K562 (cell line): ENCODE measurements at regions of chr3 and their contacts with region 1.

Region 1: GRCh38 chr3:133377396-133377795 is 22.5 kb upstream of the BFSP2 start:
- DNase-seq: peak in 2 of 4 experiments; percentile 18 to 24
- ATAC-seq: peak; percentile 71
- H3K4me3 ChIP-seq: no peak overlapping the region
- H3K27ac ChIP-seq: no peak overlapping the region
- H3K4me1 ChIP-seq: no peaks in the 10 kb centered on the region; a peak in 2 of 5 replicates
- H3K27me3 ChIP-seq: no peaks in the 10 kb centered on the region; a peak in 1 of 5 replicates
- CTCF ChIP-seq: peak; percentile 30 to 53 (median 34); a peak in 3 of 6 replicates
- EP300 ChIP-seq: no peak
- POLR2A ChIP-seq: no peak
- RAD21 ChIP-seq: peak; percentile 44 to 57

Region 2: GRCh38 chr3:133354721-133355120 is 22.7 kb before region 1 on chr3:
- CTCF ChIA-PET with region 1: no interaction called
- POLR2A ChIA-PET with region 1: no interaction called
- in situ Hi-C with region 1: no loop called
- intact Hi-C with region 1: no loop called
- DNase-seq: no peak
- ATAC-seq: no peak
- H3K4me3 ChIP-seq: no peak overlapping the region
- H3K27ac ChIP-seq: no peak overlapping the region
- H3K4me1 ChIP-seq: no peaks in the 10 kb centered on the region
- H3K27me3 ChIP-seq: no peaks in the 10 kb centered on the region
- CTCF ChIP-seq: no peak
- EP300 ChIP-seq: no peak
- POLR2A ChIP-seq: no peak
- RAD21 ChIP-seq: no peak

Region 3: DNA sequence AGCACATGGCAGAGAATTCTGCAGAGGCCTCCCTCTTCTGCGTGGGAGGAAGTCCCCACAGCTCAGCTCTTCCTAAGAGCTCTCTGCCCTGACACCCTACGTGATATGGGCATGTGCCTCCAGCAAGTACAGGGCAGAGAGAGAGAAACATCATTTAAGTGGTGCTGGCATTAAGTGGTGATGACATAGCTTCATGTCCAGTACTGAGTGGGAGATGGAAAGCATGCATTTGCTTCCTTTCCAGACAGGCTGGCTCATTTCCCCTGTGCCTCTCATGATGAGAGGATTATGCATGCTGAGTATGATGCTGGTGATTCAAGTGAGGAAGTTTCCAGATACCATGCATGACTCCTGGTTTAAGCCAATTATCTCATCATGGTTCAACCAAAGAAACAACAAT is 49.3 kb after region 1 on chr3:
- CTCF ChIA-PET with region 1: no interaction called
- POLR2A ChIA-PET with region 1: no interaction called
- in situ Hi-C with region 1: no loop called
- intact Hi-C with region 1: loop called (anchors 5 kb)
- DNase-seq: no peak
- ATAC-seq: no peak
- H3K4me3 ChIP-seq: no peak overlapping the region
- H3K27ac ChIP-seq: no peak overlapping the region
- H3K4me1 ChIP-seq: no peaks in the 10 kb centered on the region
- H3K27me3 ChIP-seq: peaks cover 0 to 4% of the 10 kb centered on the region in 2 experiments; a peak in 2 of 5 replicates
- CTCF ChIP-seq: no peak
- EP300 ChIP-seq: no peak
- POLR2A ChIP-seq: no peak
- RAD21 ChIP-seq: no peak